Activated CD4-positive, alpha-beta T cell treated with anti-CD3 and anti-CD28 coated beads, Interleukin-2, amount 10 ng/mL, durations not matched to agents 24 days and 14 days (primary cell): ENCODE measurements at regions of chr4 and their contacts with region 1.

Region 1: GRCh38 chr4:37452952-37453280 is 208.4 kb downstream of the NWD2 start:
- DNase-seq: peak; percentile 82
- H3K4me3 Mint-ChIP-seq: peak overlapping the region; percentile 69
- H3K27ac Mint-ChIP-seq: no peak overlapping the region
- H3K4me1 Mint-ChIP-seq: peaks cover 11% of the 10 kb centered on the region
- H3K27me3 Mint-ChIP-seq: peaks cover 62% of the 10 kb centered on the region

Region 2: GRCh38 chr4:36854554-36854953 is 598.4 kb before region 1 on chr4:
- intact Hi-C with region 1: no loop called
- DNase-seq: no peak
- H3K4me3 Mint-ChIP-seq: no peak overlapping the region
- H3K27ac Mint-ChIP-seq: no peak overlapping the region
- H3K4me1 Mint-ChIP-seq: no peaks in the 10 kb centered on the region
- H3K27me3 Mint-ChIP-seq: no peaks in the 10 kb centered on the region

Region 3: DNA sequence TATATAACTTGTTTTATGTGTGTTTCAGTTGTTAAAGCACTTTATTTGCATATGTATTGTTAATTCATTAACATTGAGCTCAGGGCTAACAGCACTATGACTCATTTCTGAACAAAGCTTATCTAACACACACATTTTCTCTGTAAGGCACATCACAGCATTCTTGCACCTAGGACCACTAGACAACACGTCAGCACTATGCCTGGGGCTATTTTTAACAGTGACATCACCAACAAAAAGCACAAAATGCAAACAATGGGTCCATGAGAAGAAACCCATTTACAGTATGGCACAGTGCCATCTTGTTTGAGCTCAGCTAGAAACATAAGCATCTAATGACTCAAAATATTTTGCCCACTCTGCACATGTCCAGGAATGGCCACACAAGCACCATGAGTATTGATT is 108.9 kb after region 1 on chr4:
- intact Hi-C with region 1: loop called (anchors 1 kb)
- DNase-seq: no peak
- H3K4me3 Mint-ChIP-seq: no peak overlapping the region
- H3K27ac Mint-ChIP-seq: no peak overlapping the region
- H3K4me1 Mint-ChIP-seq: no peaks in the 10 kb centered on the region
- H3K27me3 Mint-ChIP-seq: no peaks in the 10 kb centered on the region

Region 4: GRCh38 chr4:37767546-37767945 is 314.6 kb after region 1 on chr4:
- intact Hi-C with region 1: loop called (anchors 10 kb)
- DNase-seq: no peak
- H3K4me3 Mint-ChIP-seq: no peak overlapping the region
- H3K27ac Mint-ChIP-seq: no peak overlapping the region
- H3K4me1 Mint-ChIP-seq: peaks cover 11% of the 10 kb centered on the region
- H3K27me3 Mint-ChIP-seq: no peaks in the 10 kb centered on the region

Region 5: GRCh38 chr4:37793562-37793961 is 340.6 kb after region 1 on chr4:
- intact Hi-C with region 1: loop called (anchors 2 kb)
- DNase-seq: peak; percentile 65
- H3K4me3 Mint-ChIP-seq: no peak overlapping the region
- H3K27ac Mint-ChIP-seq: no peak overlapping the region
- H3K4me1 Mint-ChIP-seq: no peaks in the 10 kb centered on the region
- H3K27me3 Mint-ChIP-seq: peaks cover 11% of the 10 kb centered on the region

Region 6: GRCh38 chr4:38034986-38035882 is 582.3 kb after region 1 on chr4:
- intact Hi-C with region 1: loop called (anchors 10 kb)
- DNase-seq: peak; percentile 82
- H3K4me3 Mint-ChIP-seq: no peak overlapping the region
- H3K27ac Mint-ChIP-seq: no peak overlapping the region
- H3K4me1 Mint-ChIP-seq: no peaks in the 10 kb centered on the region
- H3K27me3 Mint-ChIP-seq: no peaks in the 10 kb centered on the region